ENCODE measurements at regions of chr9 and their contacts with region 1.

Region 1: GRCh38 chr9:124771021-124771866 is at the start of gene NR6A1:
- DNase-seq: peak; percentile 70 to 96
- H3K4me3 ChIP-seq: peak within 1 kb of the TSS; percentile 71 to 95
- H3K27ac ChIP-seq: no peak within 1 kb of the TSS
- H3K4me1 ChIP-seq: peaks cover 0 to 20% of the 10 kb centered on the region in 2 donors
- H3K27me3 ChIP-seq: peaks cover 7% of the 10 kb centered on the region
- CTCF ChIP-seq: peak in 2 of 3 experiments; percentile 22 to 26
- total RNA-seq, gene NR6A1: 0.53 TPM

Region 2: DNA sequence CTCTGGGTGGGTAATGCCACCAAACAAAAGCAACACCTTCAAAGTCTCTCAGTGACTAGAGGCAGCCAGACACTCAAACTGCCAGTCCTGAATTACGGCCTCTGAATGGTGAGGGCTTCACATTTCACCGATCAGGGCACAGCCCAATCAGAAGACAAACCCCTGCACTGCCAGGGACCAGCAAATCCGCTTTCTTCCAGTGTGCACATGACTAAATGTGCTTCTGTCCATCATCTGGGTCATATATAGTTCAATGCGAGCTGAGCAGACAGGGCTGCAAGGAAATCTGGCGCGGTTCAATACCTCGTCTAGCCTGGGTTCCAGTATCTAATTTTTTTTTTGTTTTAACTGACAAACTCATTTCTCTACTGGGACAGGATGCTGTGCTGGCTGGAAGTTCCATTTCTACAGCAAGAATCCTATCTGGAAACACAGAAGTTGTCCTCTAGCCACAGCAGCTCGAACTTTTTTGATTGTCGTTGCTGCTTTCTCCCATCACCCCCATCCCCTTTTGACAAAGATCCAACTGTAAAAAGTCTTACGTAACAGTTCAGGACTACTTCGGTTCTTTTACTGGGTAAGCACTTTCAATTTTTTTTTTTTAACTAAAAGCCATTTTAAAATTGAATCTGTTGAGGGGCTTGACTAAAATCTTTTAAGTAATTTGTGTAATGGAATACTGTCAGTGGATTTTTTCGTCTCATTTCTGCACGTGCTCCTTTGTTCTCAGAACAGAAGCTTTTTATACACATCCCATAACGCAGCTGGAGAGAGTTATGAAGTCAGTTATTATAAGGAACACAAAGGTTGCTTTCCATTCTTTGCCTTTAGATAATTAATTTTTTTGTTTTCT is 112.9 kb before region 1 on chr9:
- intact Hi-C with region 1: loop called (anchors 5 kb)
- DNase-seq: peak; percentile 19 to 87
- H3K4me3 ChIP-seq: peak overlapping the region; percentile 56 to 68
- H3K27ac ChIP-seq: peak overlapping the region; percentile 66 to 79
- H3K4me1 ChIP-seq: peaks cover 0 to 4% of the 10 kb centered on the region in 2 donors
- H3K27me3 ChIP-seq: no peaks in the 10 kb centered on the region
- CTCF ChIP-seq: no peak

Region 3: GRCh38 chr9:124784509-124784908 is 13.3 kb after region 1 on chr9:
- intact Hi-C with region 1: no loop called
- DNase-seq: peak in 1 of 2 donors; percentile 48
- H3K4me3 ChIP-seq: no peak overlapping the region
- H3K27ac ChIP-seq: no peak overlapping the region
- H3K4me1 ChIP-seq: no peaks in the 10 kb centered on the region
- H3K27me3 ChIP-seq: no peaks in the 10 kb centered on the region
- CTCF ChIP-seq: no peak

Region 4: DNA sequence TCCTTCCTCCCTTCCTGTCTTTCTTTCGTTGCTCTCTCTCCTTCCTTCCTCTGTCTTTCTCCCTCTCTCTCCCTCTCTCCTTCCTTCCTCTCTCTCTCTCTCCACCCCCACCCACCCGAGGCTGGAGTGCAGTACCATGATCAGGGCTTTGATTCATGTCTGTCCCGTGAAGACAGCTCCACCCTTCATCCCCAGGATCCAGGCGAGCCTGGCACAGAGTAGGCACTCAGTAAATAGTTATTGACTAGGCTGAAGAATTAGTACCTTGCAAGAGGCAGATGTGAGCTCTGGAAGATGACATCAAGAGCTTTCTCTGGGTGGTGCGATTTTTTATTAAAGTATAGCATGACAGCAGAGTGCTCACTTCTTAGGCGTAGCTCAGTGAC is 58.0 kb after region 1 on chr9:
- intact Hi-C with region 1: no loop called
- DNase-seq: no peak
- H3K4me3 ChIP-seq: no peak overlapping the region
- H3K27ac ChIP-seq: no peak overlapping the region
- H3K4me1 ChIP-seq: peaks cover 0 to 2% of the 10 kb centered on the region in 2 donors
- H3K27me3 ChIP-seq: no peaks in the 10 kb centered on the region
- CTCF ChIP-seq: no peak

Region 5: GRCh38 chr9:124840300-124840833 is 69.1 kb after region 1 on chr9:
- intact Hi-C with region 1: no loop called
- DNase-seq: no peak
- H3K4me3 ChIP-seq: no peak overlapping the region
- H3K27ac ChIP-seq: no peak overlapping the region
- H3K4me1 ChIP-seq: no peaks in the 10 kb centered on the region
- H3K27me3 ChIP-seq: no peaks in the 10 kb centered on the region
- CTCF ChIP-seq: peak in 2 of 3 experiments; percentile 8 to 13

Region 6: GRCh38 chr9:124861342-124862229 is 90.3 kb after region 1 on chr9 and contains the starts of genes ARPC5L and RPL35:
- intact Hi-C with region 1: loop called (anchors 1 kb)
- DNase-seq: peak; percentile 74 to 97
- H3K4me3 ChIP-seq: peak within 1 kb of the TSS; percentile 88 to 98
- H3K27ac ChIP-seq: peak within 1 kb of the TSS; percentile 90 to 97
- H3K4me1 ChIP-seq: peaks cover 8 to 13% of the 10 kb centered on the region in 2 donors
- H3K27me3 ChIP-seq: no peaks in the 10 kb centered on the region
- CTCF ChIP-seq: peak in 2 of 3 experiments; percentile 24 to 25
- total RNA-seq, gene ARPC5L: 12.0 TPM
- total RNA-seq, gene RPL35: 2,123 TPM

Region 7: DNA sequence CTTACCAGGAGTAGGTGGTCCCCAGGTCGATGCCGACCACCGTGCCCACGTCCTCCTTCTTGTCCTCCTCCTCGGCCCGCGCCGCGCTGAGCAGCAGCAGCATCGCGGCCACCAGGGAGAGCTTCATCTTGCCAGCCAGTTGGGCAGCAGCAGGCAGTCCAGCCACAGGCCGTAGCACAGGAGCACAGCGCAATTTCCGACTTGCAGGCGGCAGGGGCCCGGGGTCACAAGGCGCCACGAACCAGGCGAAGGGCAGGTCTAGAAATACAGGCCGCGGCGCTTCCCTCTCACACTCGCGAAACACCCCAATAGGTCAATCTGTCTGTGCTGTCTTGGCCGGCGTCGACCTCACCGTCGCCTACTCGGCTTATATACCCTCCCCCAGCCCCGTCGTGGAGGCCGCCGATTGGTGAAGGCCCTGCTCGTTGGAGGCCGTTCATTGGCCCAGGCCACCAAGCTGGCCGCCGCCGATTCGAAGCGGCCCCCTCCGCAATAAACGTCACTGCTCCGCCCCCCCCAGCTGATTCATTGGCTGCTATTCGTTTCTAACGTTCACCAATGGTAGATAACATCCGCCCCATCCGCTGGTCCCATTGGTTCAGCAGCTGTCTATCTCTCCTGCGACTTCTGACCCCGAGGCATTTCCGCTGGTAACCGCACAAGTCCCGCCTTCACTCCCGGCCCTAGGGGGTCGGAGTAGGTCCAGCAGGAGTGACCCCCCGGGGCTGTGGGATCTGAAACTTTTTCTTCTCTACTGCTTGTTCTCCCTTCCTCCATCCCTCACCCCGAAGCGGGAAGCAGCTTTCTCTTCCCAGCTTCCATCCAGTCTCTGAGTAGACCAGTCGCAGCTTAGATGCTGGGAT is 470.0 kb after region 1 on chr9 and contains the start of gene HSPA5:
- intact Hi-C with region 1: loop called (anchors 5 kb)
- DNase-seq: peak; percentile 99 to 100
- H3K4me3 ChIP-seq: peak within 1 kb of the TSS; percentile 79 to 95
- H3K27ac ChIP-seq: peak within 1 kb of the TSS; percentile 97
- H3K4me1 ChIP-seq: peaks cover 16 to 35% of the 10 kb centered on the region in 2 donors
- H3K27me3 ChIP-seq: no peaks in the 10 kb centered on the region
- CTCF ChIP-seq: peak in 2 of 3 experiments; percentile 19 to 28
- total RNA-seq, gene HSPA5: 133 TPM

Region 8: DNA sequence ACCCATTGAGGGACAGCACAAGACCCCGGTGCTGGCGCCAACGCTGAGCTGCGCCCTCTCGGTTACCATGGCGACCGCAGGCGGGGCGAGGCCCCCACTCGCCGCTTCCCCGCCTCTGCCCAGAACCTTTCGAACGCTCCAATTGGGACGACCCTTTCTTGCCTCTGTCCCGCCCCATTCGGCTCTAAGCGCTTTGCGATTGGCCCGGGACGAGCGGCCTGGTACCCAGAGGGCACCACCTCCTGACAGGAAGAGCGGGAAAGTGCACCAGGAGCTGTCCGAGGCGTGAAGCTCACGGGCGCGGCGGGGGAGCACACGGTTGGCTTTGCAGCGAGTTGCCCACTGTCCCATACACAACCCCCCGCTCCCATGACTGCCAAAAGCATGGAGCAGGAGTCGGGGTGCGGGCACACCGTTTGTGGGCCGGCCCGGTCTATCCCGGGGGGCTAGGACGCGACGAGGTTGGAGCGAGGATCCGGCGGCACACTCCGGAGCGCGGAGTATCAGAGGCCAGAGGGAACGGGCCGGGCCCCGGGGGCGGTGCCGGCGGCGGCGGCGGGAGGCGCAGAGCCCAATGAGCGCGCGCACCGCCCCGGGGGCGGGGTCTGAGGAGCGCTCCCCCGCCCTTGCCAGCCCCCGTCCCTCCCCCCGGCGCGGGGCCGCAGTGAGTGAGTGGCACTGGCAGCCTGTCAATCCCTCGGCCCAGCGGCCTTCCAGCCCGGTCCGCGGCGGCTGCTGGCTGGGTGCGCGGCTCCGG is 975.0 kb after region 1 on chr9:
- intact Hi-C with region 1: loop called (anchors 5 kb)
- DNase-seq: peak; percentile 82 to 97
- H3K4me3 ChIP-seq: peak overlapping the region; percentile 65 to 88
- H3K27ac ChIP-seq: peak overlapping the region; percentile 79 to 93
- H3K4me1 ChIP-seq: no peaks in the 10 kb centered on the region
- H3K27me3 ChIP-seq: no peaks in the 10 kb centered on the region
- CTCF ChIP-seq: no peak

Measured in ascending aorta (tissue), 2 donors.